Activated CD4-positive, alpha-beta T cell treated with anti-CD3 and anti-CD28 coated beads for 36 hours (primary cell): ENCODE measurements at regions of chr17 and their contacts with region 1.

Region 1: GRCh38 chr17:63621766-63622519 is at the start of gene MAP3K3:
- DNase-seq: peak; percentile 98
- ATAC-seq: peak; percentile 93
- H3K4me3 Mint-ChIP-seq: peak within 1 kb of the TSS; percentile 88
- H3K27ac Mint-ChIP-seq: peak within 1 kb of the TSS; percentile 90
- H3K4me1 Mint-ChIP-seq: peaks cover 36% of the 10 kb centered on the region
- H3K27me3 Mint-ChIP-seq: no peaks in the 10 kb centered on the region
- total RNA-seq, gene MAP3K3: 22.4 to 22.9 TPM

Region 2: DNA sequence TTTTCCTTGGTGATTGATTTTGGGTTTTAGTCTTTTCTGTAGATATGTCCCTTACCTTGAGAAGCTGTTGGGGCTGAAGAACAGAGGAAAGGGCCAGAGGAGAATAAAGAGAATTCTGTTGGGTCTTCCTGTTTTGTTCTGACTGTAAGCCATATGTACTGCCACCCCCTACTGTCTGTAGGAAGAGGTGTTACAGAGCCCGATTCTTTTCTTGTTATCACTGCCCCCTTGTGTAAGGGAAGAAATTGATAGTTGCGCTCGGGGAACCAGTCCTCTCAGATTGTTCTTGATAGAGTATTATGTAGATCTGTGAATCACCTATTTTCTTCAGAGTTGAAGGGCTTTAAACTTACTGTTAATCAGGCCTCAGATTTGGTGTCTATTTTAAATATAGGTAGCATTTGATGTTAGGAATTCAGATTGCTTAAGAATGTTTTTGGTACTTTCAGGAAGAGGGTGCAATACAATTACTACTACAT is 653.5 kb before region 1 on chr17:
- CTCF ChIA-PET with region 1: no interaction called
- POLR2A ChIA-PET with region 1: no interaction called
- intact Hi-C with region 1: loop called in 1 of 2 experiments (anchors 1 kb)
- DNase-seq: peak; percentile 62
- ATAC-seq: peak; percentile 67
- H3K4me3 Mint-ChIP-seq: no peak overlapping the region
- H3K27ac Mint-ChIP-seq: no peak overlapping the region
- H3K4me1 Mint-ChIP-seq: peaks cover 26% of the 10 kb centered on the region
- H3K27me3 Mint-ChIP-seq: peaks cover 16% of the 10 kb centered on the region

Region 3: GRCh38 chr17:63445979-63446691 is 175.8 kb before region 1 on chr17 and contains the start of gene CYB561:
- CTCF ChIA-PET with region 1: interaction called, 4 read pairs
- POLR2A ChIA-PET with region 1: interaction called, 8 read pairs
- intact Hi-C with region 1: loop called (anchors 1 to 5 kb)
- DNase-seq: peak; percentile 81
- ATAC-seq: peak; percentile 69
- H3K4me3 Mint-ChIP-seq: peak within 1 kb of the TSS; percentile 60
- H3K27ac Mint-ChIP-seq: peak within 1 kb of the TSS; percentile 72
- H3K4me1 Mint-ChIP-seq: peaks cover 23% of the 10 kb centered on the region
- H3K27me3 Mint-ChIP-seq: peaks cover 3% of the 10 kb centered on the region
- total RNA-seq, gene CYB561: 2.5 to 3.0 TPM

Region 4: GRCh38 chr17:63611354-63611753 is 10.6 kb before region 1 on chr17:
- CTCF ChIA-PET with region 1: interaction called, 36 read pairs
- POLR2A ChIA-PET with region 1: interaction called, 15 read pairs
- intact Hi-C with region 1: no loop called
- DNase-seq: peak; percentile 59
- ATAC-seq: peak; percentile 85
- H3K4me3 Mint-ChIP-seq: peak overlapping the region; percentile 51
- H3K27ac Mint-ChIP-seq: peak overlapping the region; percentile 91
- H3K4me1 Mint-ChIP-seq: peaks cover 27% of the 10 kb centered on the region
- H3K27me3 Mint-ChIP-seq: no peaks in the 10 kb centered on the region

Region 5: GRCh38 chr17:63697341-63698286 is 75.7 kb after region 1 on chr17:
- CTCF ChIA-PET with region 1: interaction called, 5 read pairs
- POLR2A ChIA-PET with region 1: interaction called, 6 read pairs
- intact Hi-C with region 1: loop called (anchors 1 kb)
- DNase-seq: peak; percentile 90
- ATAC-seq: peak; percentile 42
- H3K4me3 Mint-ChIP-seq: peak overlapping the region; percentile 79
- H3K27ac Mint-ChIP-seq: peak overlapping the region; percentile 88
- H3K4me1 Mint-ChIP-seq: peaks cover 64% of the 10 kb centered on the region
- H3K27me3 Mint-ChIP-seq: no peaks in the 10 kb centered on the region

Region 6: GRCh38 chr17:63773381-63774140 is 151.6 kb after region 1 on chr17 and contains the start of gene CCDC47:
- CTCF ChIA-PET with region 1: no interaction called
- POLR2A ChIA-PET with region 1: interaction called, 5 read pairs
- intact Hi-C with region 1: loop called (anchors 1 to 10 kb)
- DNase-seq: peak; percentile 99
- ATAC-seq: peak; percentile 83
- H3K4me3 Mint-ChIP-seq: peak within 1 kb of the TSS; percentile 98
- H3K27ac Mint-ChIP-seq: peak within 1 kb of the TSS; percentile 97
- H3K4me1 Mint-ChIP-seq: peaks cover 57% of the 10 kb centered on the region
- H3K27me3 Mint-ChIP-seq: no peaks in the 10 kb centered on the region
- total RNA-seq, gene CCDC47: 76.9 to 82.3 TPM